ENCODE measurements at regions of chr19 and their contacts with region 1.

Region 1: DNA sequence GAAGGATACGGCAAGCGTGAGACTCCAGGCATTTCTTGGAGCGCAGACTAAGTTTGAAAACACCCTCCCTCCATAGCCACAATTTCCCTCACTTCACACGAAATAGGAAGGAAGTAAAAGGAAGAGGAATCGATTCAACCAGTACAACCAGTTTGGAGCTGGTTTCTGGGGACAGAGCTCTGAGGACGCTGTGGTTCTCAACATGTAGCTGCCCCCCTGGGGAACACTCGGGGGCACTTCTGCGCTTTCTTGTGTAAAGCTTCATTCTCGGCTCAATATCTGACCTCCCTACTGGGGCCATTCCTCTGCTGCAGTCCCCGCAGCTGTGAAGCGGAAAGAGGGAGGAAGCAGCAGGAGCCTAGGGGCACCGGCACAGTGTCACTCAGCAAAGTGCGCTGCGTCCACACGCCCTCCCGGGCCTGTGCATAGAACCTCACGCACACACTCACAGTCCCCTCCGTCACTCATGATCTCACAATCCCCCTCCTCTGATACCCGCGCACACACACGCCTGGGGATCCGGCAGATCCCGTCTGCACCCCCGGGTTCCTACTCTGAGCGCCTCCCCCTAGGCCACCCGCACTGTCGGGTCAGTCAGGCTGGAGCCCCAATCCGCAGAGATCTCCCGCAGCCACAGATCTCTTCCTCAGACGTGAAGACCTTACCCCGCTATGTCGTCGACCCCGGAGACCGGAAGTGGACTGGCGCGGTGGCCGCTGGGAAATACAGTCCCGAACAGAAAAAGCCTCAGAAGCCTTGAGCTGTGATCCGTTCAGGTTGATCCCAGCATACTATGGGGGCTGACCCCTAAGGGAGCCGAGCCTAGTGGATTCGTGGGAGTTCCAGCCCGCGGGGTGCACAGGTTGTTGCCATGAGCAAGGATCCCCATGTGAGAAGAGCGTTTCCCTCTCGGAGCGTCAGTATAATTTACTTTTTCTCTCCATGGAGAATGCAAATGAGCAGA is at the start of gene ZNF780A:
- H3K4me3 ChIP-seq: peak within 1 kb of the TSS; percentile 51
- H3K27ac ChIP-seq: peak within 1 kb of the TSS; percentile 87
- H3K4me1 ChIP-seq: peaks cover 16% of the 10 kb centered on the region
- CTCF ChIP-seq: peak; percentile 38; the same call in 1 of the 2 replicates

Region 2: DNA sequence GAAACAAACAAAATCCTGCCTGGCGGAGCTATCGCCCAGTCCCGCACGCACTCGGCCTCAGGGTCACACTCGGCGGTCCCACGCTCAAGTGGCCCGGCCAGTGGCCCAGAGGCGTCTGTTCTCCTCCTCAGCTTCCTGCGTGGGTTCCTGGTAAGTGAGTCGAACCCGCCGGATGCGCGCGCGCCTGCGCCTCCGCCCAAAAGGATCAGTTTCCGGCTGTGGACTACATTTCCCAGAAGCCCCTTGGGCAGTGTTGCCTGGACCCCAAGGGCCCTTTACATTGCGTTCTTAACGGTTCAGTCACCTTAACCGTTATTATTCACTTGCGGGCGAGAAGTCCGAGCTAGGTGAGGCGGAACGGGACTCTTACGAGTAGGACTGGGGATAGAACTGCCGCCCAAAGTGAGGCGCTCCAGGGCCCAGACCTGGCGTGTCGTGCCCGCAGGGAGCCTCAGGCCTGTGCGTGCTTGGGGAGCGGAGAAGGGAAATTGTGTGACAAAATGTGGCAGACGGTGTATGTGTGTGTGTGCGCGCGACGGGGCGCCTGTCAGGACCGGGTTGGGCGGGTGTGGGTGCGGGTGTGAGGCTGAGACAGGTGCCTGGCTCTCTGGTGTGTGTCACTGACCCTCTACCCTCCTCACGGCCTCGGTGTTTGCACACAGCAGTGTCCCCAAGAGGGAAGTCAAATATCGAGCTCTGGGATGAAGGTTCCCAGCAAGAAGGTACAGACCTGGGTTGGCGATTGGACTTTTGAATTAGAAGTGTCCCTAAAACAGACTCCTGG is 93.5 kb before region 1 on chr19 and contains the start of gene ZNF546:
- CTCF ChIA-PET with region 1: no interaction called
- POLR2A ChIA-PET with region 1: interaction called, 11 read pairs
- H3K4me3 ChIP-seq: peak within 1 kb of the TSS; percentile 84
- H3K27ac ChIP-seq: peak within 1 kb of the TSS; percentile 83
- H3K4me1 ChIP-seq: peaks cover 9% of the 10 kb centered on the region
- CTCF ChIP-seq: peak; percentile 69

Region 3: DNA sequence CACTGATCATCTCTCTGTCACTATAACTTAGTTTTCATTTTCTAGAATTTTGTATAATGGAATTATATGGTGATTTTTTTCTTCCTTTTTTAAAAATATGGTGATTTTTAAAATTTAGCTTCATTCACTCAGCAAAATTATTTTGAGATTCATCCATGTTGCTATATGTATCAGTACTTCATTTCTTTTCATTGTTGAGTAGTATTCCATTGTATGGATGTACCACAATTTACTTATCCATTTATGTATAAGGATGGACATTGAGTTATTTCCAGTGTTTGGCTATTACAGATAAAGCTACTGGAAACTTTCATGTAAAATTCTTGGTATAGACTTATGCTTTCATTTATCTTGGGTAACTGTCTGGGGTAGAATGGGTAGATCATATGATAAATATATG is 80.8 kb before region 1 on chr19:
- CTCF ChIA-PET with region 1: no interaction called
- POLR2A ChIA-PET with region 1: no interaction called
- H3K4me3 ChIP-seq: no peak overlapping the region
- H3K27ac ChIP-seq: no peak overlapping the region
- H3K4me1 ChIP-seq: no peaks in the 10 kb centered on the region
- CTCF ChIP-seq: no peak

Region 4: GRCh38 chr19:40035996-40036395 is 54.5 kb before region 1 on chr19:
- CTCF ChIA-PET with region 1: no interaction called
- POLR2A ChIA-PET with region 1: no interaction called
- H3K4me3 ChIP-seq: no peak overlapping the region
- H3K27ac ChIP-seq: no peak overlapping the region
- H3K4me1 ChIP-seq: no peaks in the 10 kb centered on the region
- CTCF ChIP-seq: no peak

Region 5: GRCh38 chr19:40055832-40056504 is 34.6 kb before region 1 on chr19 and contains the start of gene ZNF780B:
- CTCF ChIA-PET with region 1: no interaction called
- POLR2A ChIA-PET with region 1: interaction called, 11 read pairs
- H3K4me3 ChIP-seq: peak within 1 kb of the TSS; percentile 64
- H3K27ac ChIP-seq: peak within 1 kb of the TSS; percentile 68; the same call in 1 of the 2 replicates
- H3K4me1 ChIP-seq: peaks cover 16% of the 10 kb centered on the region; the same call in 1 of the 2 replicates
- CTCF ChIP-seq: no peak